Right ventricle myocardium superior (tissue), 1 donor: ENCODE measurements at regions of chr2 and their contacts with region 1.

Region 1: GRCh38 chr2:205776139-205776538 is 93.8 kb downstream of the NRP2 start:
- DNase-seq: peak; percentile 63
- ATAC-seq: peak; percentile 89

Region 2: DNA sequence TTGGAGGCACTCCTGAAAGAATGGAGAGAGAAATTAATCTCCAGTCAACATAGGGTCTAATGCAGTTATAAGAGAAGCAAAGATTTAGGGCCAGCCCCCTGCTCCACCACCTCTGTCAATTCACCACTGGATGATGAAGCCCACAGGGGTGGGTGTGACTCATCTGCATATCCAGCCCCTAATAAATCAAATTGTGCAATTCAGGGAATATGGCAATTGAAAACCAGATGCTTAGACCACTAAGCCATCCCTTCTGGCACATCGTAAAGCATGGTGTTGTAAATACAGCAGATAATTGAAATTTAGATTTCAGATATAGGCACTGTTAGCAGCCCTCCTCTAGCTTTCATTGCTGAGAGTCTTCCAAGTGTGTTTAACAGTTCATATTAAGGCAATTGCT is 689.5 kb before region 1 on chr2:
- intact Hi-C with region 1: no loop called
- DNase-seq: no peak
- ATAC-seq: no peak

Region 3: DNA sequence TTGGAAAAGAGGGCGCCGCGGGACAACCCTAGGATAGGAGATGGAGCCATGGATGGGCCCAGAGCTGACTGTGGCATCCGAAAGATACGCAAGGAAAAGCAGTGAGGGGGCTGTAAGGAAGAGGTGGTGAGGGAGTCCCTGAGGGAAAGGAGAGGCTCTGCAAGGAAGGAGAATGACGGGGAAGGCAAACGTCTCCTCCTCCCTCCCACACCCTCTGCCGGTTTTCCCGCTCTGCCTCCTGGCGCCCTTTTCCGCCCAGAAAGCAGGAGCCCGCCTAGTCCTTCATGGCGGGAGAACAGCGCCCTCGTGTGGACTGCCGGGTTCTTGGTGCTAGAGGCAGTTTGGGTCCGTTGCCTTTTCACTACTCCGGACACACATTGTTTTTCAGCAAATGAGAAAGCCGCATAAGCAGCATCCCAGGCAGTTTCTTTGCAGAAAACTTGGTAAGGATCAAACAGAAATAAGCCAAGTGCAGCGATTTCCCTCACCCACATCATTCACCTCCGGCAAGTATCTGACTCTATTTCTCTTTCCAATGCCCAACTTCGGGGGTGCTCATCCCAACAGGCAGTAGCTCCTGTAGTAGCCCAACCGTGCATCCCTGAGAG is 109.5 kb after region 1 on chr2:
- intact Hi-C with region 1: loop called (anchors 5 kb)
- DNase-seq: peak; percentile 92
- ATAC-seq: peak; percentile 95

Region 4: DNA sequence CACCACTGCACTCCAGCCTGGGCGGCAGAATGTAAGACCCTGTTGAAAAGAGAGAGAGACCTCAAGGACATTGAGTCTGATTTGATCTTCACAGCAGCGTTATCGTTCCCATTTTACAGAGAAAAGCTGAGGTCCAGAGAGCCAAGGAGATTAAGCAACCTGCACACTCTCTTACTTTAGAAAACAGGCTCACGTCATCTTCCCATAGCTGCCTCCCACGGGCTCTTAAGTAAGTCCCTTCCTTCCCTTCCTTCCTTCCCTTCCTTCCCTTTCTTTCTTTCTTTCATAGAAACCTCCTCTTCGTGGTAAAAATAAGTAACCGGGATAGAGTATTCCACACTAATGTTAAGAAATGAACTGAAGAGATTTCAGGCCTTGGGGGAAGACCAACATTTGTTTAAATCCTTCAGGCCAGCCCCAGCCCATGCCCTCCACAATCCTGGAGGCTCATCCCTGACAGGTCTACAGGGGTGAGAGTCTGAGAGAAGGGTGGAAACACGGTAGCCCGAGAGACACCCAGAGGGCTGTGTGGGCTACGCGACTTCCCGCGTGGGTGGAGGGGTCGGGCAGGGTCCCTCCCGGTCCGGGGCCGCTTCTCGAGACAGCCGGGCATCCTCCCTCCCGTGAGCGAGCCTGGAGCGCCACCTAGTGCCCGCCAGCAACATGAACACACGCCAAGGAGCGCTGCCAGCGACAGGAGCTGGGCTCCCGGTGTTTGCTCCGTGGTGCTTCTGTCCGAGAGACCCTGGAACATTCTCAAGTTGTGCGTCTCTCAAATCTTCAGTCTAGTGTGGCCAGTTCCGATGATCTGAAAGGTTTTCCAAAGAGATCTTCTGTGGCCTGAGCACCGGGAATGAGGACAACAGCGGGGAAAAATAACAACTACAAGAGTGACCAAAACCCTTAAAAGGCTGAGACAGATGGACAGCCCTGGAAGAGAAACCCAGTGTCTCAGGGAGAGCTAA is 149.5 kb after region 1 on chr2:
- intact Hi-C with region 1: loop called (anchors 10 kb)
- DNase-seq: peak; percentile 86
- ATAC-seq: peak; percentile 96

Region 5: DNA sequence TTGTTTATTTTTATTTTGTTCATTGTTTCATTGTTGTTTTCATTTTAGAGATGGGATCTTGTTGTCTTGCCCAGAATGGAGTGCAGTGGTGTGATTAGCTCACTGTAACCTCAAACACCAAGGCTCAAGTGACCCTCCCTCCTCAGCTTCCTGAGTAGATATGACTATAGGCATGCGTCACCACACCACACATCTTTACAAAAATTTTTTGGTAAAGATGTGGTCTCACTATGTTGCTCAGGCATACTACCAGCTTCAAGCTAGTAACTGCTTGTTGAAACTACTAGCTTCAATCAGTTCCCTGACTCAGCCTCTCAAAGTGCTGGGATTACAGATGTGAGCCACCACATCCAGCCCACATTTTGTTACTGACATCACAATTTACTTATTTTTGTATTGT is 880.9 kb after region 1 on chr2:
- intact Hi-C with region 1: no loop called
- DNase-seq: no peak
- ATAC-seq: no peak